Prostate gland (tissue), 2 donors: ENCODE measurements at regions of chrX and their contacts with region 1.

Region 1: DNA sequence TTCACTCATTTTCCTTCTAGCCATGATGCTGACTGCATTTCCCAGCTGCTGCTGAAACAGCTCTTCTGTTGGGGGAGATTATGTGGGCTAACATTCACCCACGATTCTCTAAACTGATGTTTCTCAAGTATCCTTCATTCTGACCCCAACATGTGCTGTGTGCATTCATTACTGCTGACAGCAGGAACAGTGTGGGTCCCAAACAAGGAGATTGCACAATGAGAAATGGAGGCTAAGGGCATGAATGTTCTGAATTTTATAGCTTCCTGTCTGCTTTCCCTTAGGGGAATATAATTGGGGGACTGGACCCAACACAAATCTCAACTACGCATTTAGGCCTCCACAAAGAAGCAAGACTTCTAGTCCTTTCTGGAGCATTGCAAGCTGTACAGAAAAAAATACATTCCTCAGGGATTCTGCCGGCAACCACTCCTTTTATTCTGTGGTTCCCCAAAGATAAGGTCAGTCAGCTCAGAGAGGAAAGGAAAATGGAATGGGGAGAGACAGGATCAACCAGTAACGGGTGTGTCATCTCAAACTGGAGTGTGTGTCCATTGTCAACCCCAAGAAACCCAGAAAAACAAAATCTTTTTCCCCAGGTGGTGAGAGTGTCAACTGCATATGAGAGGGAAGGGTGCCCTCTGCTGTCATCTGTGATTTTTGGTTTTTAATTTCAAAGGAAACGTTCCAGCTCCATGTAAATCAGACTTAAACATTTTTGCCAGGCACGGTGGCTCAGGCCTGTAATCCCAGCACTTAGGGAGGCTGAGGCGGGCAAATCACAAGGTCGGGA is 81.5 kb upstream of the EGFL6 start:
- DNase-seq: peak; percentile 21
- H3K4me3 ChIP-seq: no peak overlapping the region
- H3K27ac ChIP-seq: peak overlapping the region; percentile 26 to 55
- H3K4me1 ChIP-seq: no peaks in the 10 kb centered on the region
- H3K27me3 ChIP-seq: no peaks in the 10 kb centered on the region
- CTCF ChIP-seq: peak; percentile 30 to 79 (median 61)
- POLR2A ChIP-seq: no peak

Region 2: GRCh38 chrX:12974796-12975669 is 512.9 kb before region 1 on chrX and contains the start of gene TMSB4X:
- intact Hi-C with region 1: loop called (anchors 2 kb)
- DNase-seq: peak; percentile 77
- H3K4me3 ChIP-seq: peak within 1 kb of the TSS; percentile 51 to 55
- H3K27ac ChIP-seq: peak within 1 kb of the TSS; percentile 86 to 87
- H3K4me1 ChIP-seq: no peaks in the 10 kb centered on the region
- H3K27me3 ChIP-seq: no peaks in the 10 kb centered on the region
- CTCF ChIP-seq: peak in 2 of 4 experiments; percentile 8 to 17
- POLR2A ChIP-seq: peak; percentile 90
- total RNA-seq, gene TMSB4X: 1,116 to 1,330 TPM

Region 3: DNA sequence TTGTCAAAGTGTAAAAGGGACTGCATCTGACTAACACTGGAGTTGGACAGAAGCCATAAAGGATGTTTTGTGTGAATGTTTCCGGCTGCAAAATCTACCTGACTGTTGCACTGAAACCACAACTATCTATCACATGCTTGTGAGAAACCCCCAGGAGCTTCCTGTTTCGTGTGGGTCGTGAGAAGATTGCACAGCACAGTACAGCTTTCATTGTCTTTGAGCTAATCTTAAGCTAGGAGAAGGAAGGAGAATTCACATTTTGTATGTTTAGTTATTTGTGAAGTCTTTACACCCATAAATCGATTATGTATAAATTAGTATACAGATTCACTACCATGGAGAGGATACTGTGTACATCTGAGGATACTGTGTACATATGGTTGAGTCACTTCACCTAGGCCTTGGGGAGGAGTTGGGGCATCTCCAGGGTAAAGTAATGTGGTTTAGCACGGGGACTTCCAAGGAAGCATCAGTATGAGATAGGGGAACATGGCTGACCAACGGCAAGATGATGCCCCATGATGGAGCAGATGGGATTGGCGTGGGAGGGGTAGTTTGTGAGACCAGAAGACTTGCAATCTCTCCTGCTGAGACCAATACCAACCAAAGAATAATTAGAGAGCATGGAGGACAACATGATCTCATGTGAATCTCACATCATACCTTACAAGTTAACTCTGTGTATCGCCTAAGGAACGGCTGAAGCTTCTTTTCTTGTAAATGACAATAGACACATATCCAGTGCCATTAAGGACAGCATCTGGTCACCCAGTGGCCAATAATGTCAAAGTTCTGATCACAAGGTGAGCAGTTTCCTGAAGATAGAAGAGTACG is 400.4 kb before region 1 on chrX:
- intact Hi-C with region 1: loop called (anchors 10 kb)
- DNase-seq: no peak
- H3K4me3 ChIP-seq: no peak overlapping the region
- H3K27ac ChIP-seq: no peak overlapping the region
- H3K4me1 ChIP-seq: no peaks in the 10 kb centered on the region
- H3K27me3 ChIP-seq: no peaks in the 10 kb centered on the region
- CTCF ChIP-seq: no peak
- POLR2A ChIP-seq: no peak

Region 4: DNA sequence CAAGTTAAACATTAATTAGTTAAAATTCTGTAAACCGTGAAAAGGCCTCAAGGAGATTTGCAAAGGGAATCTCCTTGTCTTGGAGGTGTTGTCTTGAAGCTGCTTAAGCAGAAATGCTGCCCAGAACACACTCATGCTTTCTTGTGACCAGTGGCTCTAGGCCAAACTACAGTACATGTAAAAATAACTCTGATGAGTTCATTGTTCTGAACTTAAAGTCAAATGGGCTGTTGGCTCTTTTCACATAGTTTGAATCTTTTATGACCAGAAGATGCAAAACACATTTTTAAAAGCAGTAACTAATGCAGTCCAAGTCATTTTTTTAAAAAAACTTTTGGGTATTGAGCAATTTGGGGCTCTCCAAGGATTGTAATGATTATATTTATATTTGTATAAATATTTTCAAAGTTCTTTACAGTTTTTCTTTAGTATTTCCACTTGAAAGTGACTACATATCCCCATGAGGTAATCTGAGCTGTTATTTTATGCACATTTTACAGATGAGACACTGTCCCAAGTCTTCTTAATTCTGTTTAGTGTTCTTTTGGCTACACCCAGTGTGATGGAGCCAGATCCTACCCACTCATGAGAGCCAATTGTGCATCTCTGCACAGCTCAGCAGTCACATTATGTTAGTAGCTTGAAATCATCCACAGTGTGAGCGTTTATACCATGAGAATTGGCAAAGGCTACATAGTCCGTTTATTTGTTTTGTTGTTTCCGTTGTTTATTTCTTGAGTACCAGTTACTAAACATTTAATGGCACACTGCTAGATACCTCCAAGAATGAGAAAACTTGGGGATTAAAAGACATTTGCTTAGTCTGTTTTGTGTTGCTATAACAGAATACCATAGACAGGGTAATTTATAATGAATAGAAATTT is 55.3 kb before region 1 on chrX:
- intact Hi-C with region 1: loop called (anchors 10 kb)
- DNase-seq: peak; percentile 4
- H3K4me3 ChIP-seq: no peak overlapping the region
- H3K27ac ChIP-seq: peak overlapping the region in 1 of 2 donors; percentile 5
- H3K4me1 ChIP-seq: no peaks in the 10 kb centered on the region
- H3K27me3 ChIP-seq: no peaks in the 10 kb centered on the region
- CTCF ChIP-seq: no peak
- POLR2A ChIP-seq: no peak